ENCODE measurements at regions of chr16 and their contacts with region 1.

Region 1: DNA sequence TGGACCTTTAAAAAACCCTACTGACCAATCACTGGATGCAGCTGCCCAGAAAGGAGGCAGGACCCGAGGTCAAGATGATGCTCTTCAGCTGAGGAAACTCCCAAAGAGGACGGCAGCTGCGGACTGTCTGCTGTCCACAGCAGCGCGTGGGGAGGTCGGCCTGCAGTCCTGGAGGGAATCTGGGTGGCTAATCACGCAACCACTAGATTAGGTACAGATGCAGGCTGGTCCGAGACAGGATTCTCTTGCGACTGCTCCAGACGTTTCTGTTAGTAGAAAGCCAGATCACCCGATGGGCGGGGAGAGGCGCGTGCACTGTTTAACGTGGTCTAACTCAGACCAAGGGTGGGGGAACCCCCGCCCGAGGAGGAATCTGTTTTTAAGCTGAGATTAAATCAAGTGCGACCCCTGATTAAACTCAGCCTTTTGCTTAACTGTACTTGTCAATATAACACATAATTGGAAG is 8.8 kb downstream of the CTRB2 start:
- DNase-seq: no peak
- H3K4me3 Mint-ChIP-seq: no peak overlapping the region
- H3K27ac Mint-ChIP-seq: no peak overlapping the region
- H3K4me1 Mint-ChIP-seq: peaks cover 17% of the 10 kb centered on the region
- H3K27me3 Mint-ChIP-seq: peaks cover 52% of the 10 kb centered on the region

Region 2: DNA sequence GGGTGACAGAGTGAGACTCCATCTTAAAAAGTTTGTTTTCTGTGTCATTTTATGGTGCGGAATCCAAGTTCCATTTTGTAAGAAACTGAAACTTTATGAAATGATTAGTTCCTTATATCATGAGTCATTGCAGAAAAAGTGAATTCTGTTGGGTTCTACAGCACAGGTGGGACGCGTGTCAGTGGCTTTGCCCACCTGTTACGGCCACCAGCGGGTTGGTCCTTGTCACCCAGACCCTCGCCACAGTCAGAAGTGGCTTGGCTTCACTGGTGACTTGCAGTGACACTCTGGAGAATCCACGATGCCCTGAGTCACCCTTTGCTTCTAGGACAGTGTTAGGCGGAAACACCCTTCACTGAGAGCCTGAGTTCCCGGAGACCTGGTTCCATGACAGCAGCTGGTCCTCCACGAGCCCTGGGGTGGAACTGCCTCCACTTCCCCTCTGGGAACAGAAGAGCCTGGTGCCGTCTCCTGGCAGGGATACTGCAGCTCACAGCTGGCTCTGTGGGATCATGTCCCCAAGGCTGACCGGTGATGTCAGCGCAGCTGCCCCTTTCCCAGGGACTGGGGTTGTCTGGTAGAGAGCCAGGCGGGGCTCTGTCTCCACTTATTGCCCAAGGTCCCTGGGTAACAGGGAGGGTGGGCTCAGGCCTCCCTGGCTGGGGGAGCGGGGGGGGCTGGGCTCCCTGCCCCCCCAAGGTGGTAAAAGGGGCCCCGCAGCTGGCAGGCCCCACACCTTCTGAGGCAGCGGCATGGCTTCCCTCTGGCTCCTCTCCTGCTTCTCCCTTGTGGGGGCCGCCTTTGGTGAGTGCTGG is 20.3 kb after region 1 on chr16 and contains the start of gene CTRB1:
- CTCF ChIA-PET with region 1: interaction called, 31 read pairs
- DNase-seq: no peak
- H3K4me3 Mint-ChIP-seq: peak within 1 kb of the TSS; percentile 72
- H3K27ac Mint-ChIP-seq: peak within 1 kb of the TSS; percentile 93
- H3K4me1 Mint-ChIP-seq: peaks cover 14% of the 10 kb centered on the region
- H3K27me3 Mint-ChIP-seq: peaks cover 2% of the 10 kb centered on the region

Region 3: GRCh38 chr16:75234856-75235696 is 36.9 kb after region 1 on chr16:
- CTCF ChIA-PET with region 1: interaction called, 26 read pairs
- DNase-seq: no peak
- H3K4me3 Mint-ChIP-seq: no peak overlapping the region
- H3K27ac Mint-ChIP-seq: no peak overlapping the region
- H3K4me1 Mint-ChIP-seq: no peaks in the 10 kb centered on the region
- H3K27me3 Mint-ChIP-seq: peaks cover 25% of the 10 kb centered on the region

Region 4: GRCh38 chr16:75256696-75257343 is 58.7 kb after region 1 on chr16:
- CTCF ChIA-PET with region 1: no interaction called
- DNase-seq: peak; percentile 10
- H3K4me3 Mint-ChIP-seq: no peak overlapping the region
- H3K27ac Mint-ChIP-seq: no peak overlapping the region
- H3K4me1 Mint-ChIP-seq: peaks cover 5% of the 10 kb centered on the region
- H3K27me3 Mint-ChIP-seq: peaks cover 93% of the 10 kb centered on the region

Region 5: DNA sequence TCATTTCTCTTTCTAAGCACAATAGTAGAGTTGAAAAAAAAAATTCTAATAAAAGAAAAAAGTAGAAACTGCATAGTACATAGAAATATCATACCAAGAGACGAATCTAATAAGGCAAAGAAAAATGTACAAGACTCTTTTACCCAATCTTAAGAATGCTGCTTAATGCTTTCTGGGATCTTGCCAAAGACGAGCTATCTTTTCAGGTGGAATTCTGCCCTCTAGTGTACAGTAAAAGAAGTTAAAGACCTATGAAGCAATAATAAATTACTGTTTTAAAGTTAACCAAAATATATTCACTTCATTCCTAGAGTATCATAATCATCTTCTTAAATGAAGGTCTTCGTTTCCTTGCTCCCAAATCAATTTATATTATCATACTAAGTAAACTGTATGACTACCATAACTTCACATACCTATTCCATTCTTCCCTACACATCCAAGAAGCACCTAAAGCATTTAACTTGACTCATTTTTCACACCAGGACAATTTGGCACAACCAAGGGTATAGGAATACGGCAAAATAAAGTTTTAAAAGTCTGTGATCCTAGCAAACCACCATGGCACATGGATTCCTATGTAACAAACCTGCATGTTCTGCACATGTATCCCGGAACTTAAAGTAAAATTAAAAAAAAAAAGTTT is 187.5 kb after region 1 on chr16:
- CTCF ChIA-PET with region 1: interaction called, 15 read pairs
- DNase-seq: no peak
- H3K4me3 Mint-ChIP-seq: no peak overlapping the region
- H3K27ac Mint-ChIP-seq: no peak overlapping the region
- H3K4me1 Mint-ChIP-seq: peaks cover 17% of the 10 kb centered on the region
- H3K27me3 Mint-ChIP-seq: peaks cover 18% of the 10 kb centered on the region

Region 6: GRCh38 chr16:75402821-75403475 is 204.8 kb after region 1 on chr16:
- CTCF ChIA-PET with region 1: interaction called, 20 read pairs
- DNase-seq: no peak
- H3K4me3 Mint-ChIP-seq: no peak overlapping the region
- H3K27ac Mint-ChIP-seq: no peak overlapping the region
- H3K4me1 Mint-ChIP-seq: no peaks in the 10 kb centered on the region
- H3K27me3 Mint-ChIP-seq: no peaks in the 10 kb centered on the region

Region 7: DNA sequence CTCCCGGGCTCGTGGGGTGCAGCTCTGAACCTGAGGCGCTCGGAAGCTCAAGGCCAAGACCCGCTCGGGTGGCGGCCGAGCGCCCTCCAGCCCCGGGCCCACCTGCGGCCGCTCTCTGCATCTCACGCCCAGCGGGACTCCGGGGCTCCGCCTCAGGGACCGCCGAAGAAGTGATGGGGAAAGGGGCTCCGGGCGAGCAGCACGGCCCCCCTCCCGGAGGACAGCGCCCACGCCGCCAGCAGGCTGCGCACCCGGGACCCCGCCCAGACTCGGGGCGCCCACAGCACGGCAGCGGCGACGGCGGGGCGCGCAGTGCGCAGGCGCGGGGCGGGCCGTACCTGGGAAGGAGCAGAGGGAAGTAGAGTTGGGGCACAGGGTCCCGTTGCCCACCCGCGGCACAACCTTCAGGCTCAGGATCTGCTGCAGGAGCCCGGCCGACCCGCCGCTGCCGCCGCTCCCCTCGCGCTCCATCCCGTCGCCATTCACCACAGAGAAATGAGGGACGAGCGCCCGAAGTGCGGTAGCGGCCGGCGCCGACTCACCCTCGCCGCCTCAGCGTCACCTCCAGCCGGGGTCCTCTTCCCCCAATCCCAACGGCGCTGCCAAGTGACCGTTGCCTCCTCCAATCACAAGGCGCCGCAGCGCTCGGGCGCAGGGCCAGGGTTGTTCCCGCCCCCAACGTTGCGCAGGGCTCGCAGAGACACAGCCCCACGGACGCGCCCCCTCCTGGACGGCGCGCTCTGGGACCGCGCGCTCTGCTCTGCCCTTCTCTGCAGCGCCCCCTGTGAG is 266.2 kb after region 1 on chr16 and contains the start of gene TMEM170A:
- CTCF ChIA-PET with region 1: interaction called, 13 read pairs
- DNase-seq: peak; percentile 99
- H3K4me3 Mint-ChIP-seq: peak within 1 kb of the TSS; percentile 84
- H3K27ac Mint-ChIP-seq: peak within 1 kb of the TSS; percentile 94
- H3K4me1 Mint-ChIP-seq: peaks cover 43% of the 10 kb centered on the region
- H3K27me3 Mint-ChIP-seq: no peaks in the 10 kb centered on the region

Region 8: DNA sequence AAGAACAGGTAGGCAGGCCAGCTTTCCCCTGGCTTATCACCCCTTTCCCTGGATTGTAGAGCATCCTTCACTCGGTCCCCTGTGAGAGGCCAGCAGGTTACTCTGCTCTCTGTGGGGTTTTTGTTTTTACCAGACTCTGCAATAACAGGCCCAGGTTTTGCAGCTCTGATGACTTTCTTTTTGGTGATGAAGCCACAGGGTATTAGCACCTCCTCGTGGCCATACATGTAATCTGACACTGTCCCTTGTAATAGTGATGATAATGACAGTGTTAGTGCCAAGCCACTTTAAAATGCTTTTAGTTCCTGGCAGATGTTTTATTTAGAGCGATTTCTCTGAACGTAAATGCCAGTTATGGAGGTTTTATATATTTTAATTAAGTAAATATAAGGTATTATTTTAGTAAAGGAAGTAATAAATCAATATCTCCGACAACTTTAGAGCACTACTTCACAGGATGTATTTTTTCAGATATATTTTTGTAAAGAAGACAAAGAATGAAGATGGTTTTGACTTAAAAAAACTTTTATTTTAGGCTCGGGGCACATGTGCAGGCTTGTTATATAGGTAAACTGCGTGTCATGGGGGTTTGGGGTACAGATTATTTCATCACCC is 566.1 kb after region 1 on chr16:
- CTCF ChIA-PET with region 1: interaction called, 10 read pairs
- DNase-seq: peak; percentile 76
- H3K4me3 Mint-ChIP-seq: no peak overlapping the region
- H3K27ac Mint-ChIP-seq: no peak overlapping the region
- H3K4me1 Mint-ChIP-seq: peaks cover 6% of the 10 kb centered on the region
- H3K27me3 Mint-ChIP-seq: peaks cover 5% of the 10 kb centered on the region

Measured in activated naive CD4-positive, alpha-beta T cell treated with anti-CD3 and anti-CD28 coated beads, Interleukin-2, amount 10 ng/mL, durations not matched to agents 7 days and 5 days (primary cell).